A549 (cell line): ENCODE measurements at regions of chrX and their contacts with region 1.

Region 1: GRCh38 chrX:24498975-24499374 is 33.9 kb downstream of the PDK3 start:
- DNase-seq: peak; percentile 24 to 25
- ATAC-seq: peak; percentile 61 to 76; a peak in 3 of 6 replicates
- H3K4me3 ChIP-seq: no peak overlapping the region
- H3K27ac ChIP-seq: no peak overlapping the region
- H3K4me1 ChIP-seq: peaks cover 12% of the 10 kb centered on the region
- CTCF ChIP-seq: peak; percentile 56
- EP300 ChIP-seq: no peak
- POLR2A ChIP-seq: no peak
- RAD21 ChIP-seq: peak; percentile 60 to 62

Region 2: DNA sequence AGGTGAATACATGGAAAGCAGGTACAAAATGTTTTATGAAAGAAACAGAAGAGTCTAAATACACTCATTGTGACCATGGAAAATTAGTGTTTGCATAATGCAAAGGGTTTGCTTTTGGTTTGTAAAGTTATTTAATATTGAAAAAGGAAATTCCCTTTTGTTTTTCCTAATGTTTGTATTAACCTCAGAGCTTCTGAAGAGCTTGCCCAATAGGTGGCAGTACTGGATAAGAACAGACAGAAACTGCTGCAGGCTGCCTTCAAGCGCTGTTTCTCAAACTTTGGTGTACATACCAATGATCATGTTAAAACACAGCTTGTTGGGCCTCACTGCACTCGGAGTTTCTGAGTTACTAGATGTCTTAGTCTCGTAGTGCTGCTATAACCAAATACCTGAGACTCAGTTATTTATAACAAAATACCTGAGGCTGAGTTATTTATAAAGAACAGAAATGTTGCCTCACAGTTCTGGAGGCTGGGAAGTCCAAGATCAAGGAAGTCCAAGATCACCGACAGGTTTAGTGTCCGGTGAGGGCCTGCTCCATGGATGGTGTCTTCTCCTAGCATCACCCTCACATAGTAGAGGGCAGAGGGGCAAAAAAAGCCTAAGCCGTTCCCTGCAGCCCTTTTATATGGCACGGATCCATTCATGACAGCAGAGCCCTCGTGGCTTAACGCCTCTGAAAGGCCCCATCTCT is 239.3 kb before region 1 on chrX:
- CTCF ChIA-PET with region 1: interaction called, 31 read pairs
- POLR2A ChIA-PET with region 1: interaction called, 3 read pairs
- DNase-seq: peak; percentile 43 to 76
- ATAC-seq: peak; percentile 83 to 86; a peak in 5 of 6 replicates
- H3K4me3 ChIP-seq: no peak overlapping the region
- H3K27ac ChIP-seq: no peak overlapping the region
- H3K4me1 ChIP-seq: peaks cover 20% of the 10 kb centered on the region
- CTCF ChIP-seq: peak; percentile 67
- EP300 ChIP-seq: no peak
- POLR2A ChIP-seq: no peak
- RAD21 ChIP-seq: peak; percentile 76 to 79

Region 3: GRCh38 chrX:24380262-24381187 is 118.5 kb before region 1 on chrX:
- CTCF ChIA-PET with region 1: interaction called, 11 read pairs
- POLR2A ChIA-PET with region 1: no interaction called
- DNase-seq: no peak
- ATAC-seq: no peak
- H3K4me3 ChIP-seq: no peak overlapping the region
- H3K27ac ChIP-seq: no peak overlapping the region
- H3K4me1 ChIP-seq: no peaks in the 10 kb centered on the region
- CTCF ChIP-seq: no peak
- EP300 ChIP-seq: no peak
- POLR2A ChIP-seq: no peak
- RAD21 ChIP-seq: no peak

Region 4: GRCh38 chrX:24395775-24396174 is 103.2 kb before region 1 on chrX:
- CTCF ChIA-PET with region 1: interaction called, 226 read pairs
- POLR2A ChIA-PET with region 1: no interaction called
- DNase-seq: peak; percentile 57 to 71
- ATAC-seq: peak; percentile 81 to 94
- H3K4me3 ChIP-seq: no peak overlapping the region
- H3K27ac ChIP-seq: no peak overlapping the region
- H3K4me1 ChIP-seq: no peaks in the 10 kb centered on the region
- CTCF ChIP-seq: peak; percentile 79
- EP300 ChIP-seq: no peak
- POLR2A ChIP-seq: no peak
- RAD21 ChIP-seq: peak; percentile 85 to 94

Region 5: DNA sequence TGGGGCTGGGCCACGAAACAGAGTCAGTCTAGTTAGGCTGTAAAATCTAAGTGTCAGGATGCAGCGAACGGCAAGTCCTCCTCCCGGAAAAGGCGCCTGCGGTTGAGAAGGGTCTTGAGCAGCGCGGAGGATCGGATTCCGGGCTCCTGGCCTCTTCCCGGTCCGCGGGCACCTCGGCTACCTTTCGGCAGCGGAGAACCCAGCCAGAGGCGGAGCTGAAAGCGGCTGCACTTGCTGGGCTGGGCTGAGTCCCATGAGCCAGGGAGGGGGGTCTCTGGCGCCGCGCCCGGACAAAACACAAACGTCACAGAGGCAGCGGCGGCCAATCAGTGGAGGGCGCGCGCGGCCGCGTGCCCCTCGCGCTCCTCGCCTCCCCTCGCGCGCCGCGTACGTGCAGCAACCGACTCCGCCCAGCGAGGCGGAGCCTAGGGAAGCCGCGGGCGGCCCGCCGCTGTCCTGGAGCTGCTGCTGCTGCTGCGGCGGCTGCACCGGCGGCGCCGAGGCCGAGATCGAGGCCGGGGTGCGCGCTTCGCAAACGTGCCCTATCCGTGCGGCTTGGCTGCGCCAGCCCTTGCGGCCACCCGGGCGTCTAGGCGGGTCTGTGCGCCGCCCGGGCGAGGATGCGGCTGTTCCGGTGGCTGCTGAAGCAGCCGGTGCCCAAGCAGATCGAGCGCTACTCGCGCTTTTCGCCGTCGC is 34.0 kb before region 1 on chrX and contains the start of gene PDK3:
- CTCF ChIA-PET with region 1: interaction called, 15 read pairs
- POLR2A ChIA-PET with region 1: no interaction called
- DNase-seq: peak; percentile 71 to 88
- ATAC-seq: peak; percentile 95 to 99
- H3K4me3 ChIP-seq: peak within 1 kb of the TSS; percentile 95
- H3K27ac ChIP-seq: peak within 1 kb of the TSS; percentile 84 to 92
- H3K4me1 ChIP-seq: 0 out of 3 replicates have a peak, but pooled peaks cover 5% of the 10 kb centered on the region
- CTCF ChIP-seq: no peak
- EP300 ChIP-seq: no peak
- POLR2A ChIP-seq: peak; percentile 77
- RAD21 ChIP-seq: no peak
- polyA plus RNA-seq, gene PDK3: 14.1 and 18.7 TPM in 2 replicates